AG04449 (cell line): ENCODE measurements at regions of chr10 and their contacts with region 1.

Region 1: GRCh38 chr10:11782793-11783557 is 40.2 kb upstream of the PROSER2 start:
- DNase-seq: no peak
- H3K4me3 ChIP-seq: no peak overlapping the region
- CTCF ChIP-seq: peak; percentile 39

Region 2: GRCh38 chr10:11638055-11638857 is 144.7 kb before region 1 on chr10:
- CTCF ChIA-PET with region 1: no interaction called
- POLR2A ChIA-PET with region 1: no interaction called
- DNase-seq: no peak
- H3K4me3 ChIP-seq: no peak overlapping the region
- CTCF ChIP-seq: no peak

Region 3: GRCh38 chr10:11757821-11758463 is 25.0 kb before region 1 on chr10:
- CTCF ChIA-PET with region 1: interaction called, 14 read pairs
- POLR2A ChIA-PET with region 1: no interaction called
- DNase-seq: no peak
- H3K4me3 ChIP-seq: no peak overlapping the region
- CTCF ChIP-seq: peak; percentile 92

Region 4: GRCh38 chr10:11772575-11773288 is 10.2 kb before region 1 on chr10:
- CTCF ChIA-PET with region 1: interaction called, 19 read pairs
- POLR2A ChIA-PET with region 1: no interaction called
- DNase-seq: no peak
- H3K4me3 ChIP-seq: no peak overlapping the region
- CTCF ChIP-seq: no peak

Region 5: GRCh38 chr10:11793762-11794479 is 10.9 kb after region 1 on chr10:
- CTCF ChIA-PET with region 1: interaction called, 42 read pairs
- POLR2A ChIA-PET with region 1: no interaction called
- DNase-seq: peak; percentile 24
- H3K4me3 ChIP-seq: no peak overlapping the region
- CTCF ChIP-seq: no peak

Region 6: GRCh38 chr10:11798845-11799735 is 16.1 kb after region 1 on chr10:
- CTCF ChIA-PET with region 1: interaction called, 42 read pairs
- POLR2A ChIA-PET with region 1: no interaction called
- DNase-seq: no peak
- H3K4me3 ChIP-seq: no peak overlapping the region
- CTCF ChIP-seq: no peak

Region 7: DNA sequence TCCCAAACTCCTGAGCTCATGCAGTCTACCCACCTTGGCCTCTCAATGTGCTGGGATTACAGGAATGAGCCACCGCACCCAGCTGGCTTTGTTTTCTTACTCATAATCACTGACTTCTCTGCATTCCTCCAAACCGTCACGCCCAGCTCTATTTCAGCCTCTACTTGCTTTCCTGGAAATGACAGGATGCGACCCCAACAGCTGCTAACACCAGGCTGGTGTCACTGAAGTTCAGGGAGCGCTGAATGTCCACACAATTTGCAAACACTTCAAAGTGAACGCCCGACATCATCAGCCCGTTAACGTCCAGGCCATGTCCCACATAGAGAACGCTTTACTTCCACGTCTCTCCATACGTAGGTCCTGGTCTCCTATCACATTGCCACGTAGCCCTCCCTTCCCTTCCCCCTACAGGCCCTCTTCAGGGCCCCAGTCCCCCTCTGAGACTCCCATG is 27.4 kb after region 1 on chr10:
- CTCF ChIA-PET with region 1: interaction called, 15 read pairs
- POLR2A ChIA-PET with region 1: no interaction called
- DNase-seq: no peak
- H3K4me3 ChIP-seq: no peak overlapping the region
- CTCF ChIP-seq: no peak

Region 8: DNA sequence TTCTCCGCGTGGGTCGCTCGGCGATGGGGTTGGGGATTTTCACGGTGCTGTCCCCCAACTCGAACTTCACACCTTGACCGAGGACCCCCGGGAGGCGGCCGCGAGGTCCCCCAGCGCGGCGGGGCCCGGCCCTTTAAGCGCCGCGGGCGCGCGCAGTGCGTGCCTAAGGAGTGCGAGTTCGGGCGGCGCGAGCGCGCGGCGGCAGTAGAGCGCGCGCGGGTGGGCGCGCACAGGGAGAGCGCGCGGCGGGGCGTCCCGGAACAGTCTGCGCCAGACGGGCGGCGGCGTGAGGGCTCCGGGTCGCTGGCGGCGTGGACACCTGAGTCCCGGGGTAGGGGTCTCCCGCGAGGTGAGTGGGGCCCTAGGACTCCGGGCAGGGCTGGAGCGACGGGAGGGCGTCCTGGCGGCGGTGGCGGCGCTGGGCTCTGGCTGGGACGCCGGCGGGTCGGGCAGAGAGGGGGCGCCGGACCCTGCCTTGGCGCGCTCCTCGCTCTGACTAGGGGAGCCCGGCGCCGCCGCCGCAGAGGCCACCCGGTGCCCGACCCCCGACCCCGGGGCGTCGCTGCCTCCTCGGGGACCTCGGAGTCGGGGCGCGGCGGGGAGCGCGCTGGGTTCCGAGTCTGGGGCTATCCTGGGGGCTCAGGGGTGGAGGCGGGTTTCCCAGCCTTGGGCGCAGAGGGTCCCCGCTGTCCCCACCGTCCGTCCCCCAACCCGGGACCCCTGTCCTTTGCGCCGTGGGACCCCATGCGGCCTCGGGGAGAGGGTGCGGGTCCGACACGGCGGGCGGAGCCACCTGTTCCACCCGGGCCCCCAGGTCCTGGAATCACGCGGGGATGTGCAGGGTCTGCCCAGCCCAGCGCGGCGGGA is 40.4 kb after region 1 on chr10 and contains the start of gene PROSER2:
- CTCF ChIA-PET with region 1: interaction called, 26 read pairs
- POLR2A ChIA-PET with region 1: no interaction called
- DNase-seq: no peak
- H3K4me3 ChIP-seq: peak within 1 kb of the TSS; percentile 63
- CTCF ChIP-seq: no peak